ENCODE measurements at regions of chr3 and their contacts with region 1.

Region 1: GRCh38 chr3:50542177-50543034 is 25.1 kb downstream of the C3orf18 start:
- DNase-seq: peak; percentile 77
- H3K4me3 ChIP-seq: no peak overlapping the region
- H3K27ac ChIP-seq: no peak overlapping the region
- H3K4me1 ChIP-seq: no peaks in the 10 kb centered on the region
- H3K27me3 ChIP-seq: no peaks in the 10 kb centered on the region
- CTCF ChIP-seq: peak; percentile 85

Region 2: DNA sequence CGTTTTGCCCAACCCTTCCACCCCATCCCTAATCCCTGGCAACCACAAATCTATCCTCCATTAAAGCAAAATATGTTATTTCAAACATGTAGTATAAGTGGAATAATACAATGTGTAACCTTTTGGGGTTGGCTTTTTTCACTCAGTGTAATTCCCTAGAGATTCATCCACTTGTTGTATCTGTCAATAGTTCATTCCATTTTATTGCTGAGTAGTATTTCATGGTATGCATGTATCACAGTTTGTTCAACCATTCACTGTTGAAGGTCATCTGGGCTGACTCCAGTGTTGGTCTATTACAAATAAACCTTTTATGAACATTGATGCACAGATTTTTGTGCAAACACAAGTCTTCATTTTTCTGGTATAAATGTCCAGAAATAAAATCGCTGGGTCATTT is 949.4 kb before region 1 on chr3:
- intact Hi-C with region 1: no loop called
- DNase-seq: no peak
- H3K4me3 ChIP-seq: no peak overlapping the region
- H3K27ac ChIP-seq: no peak overlapping the region
- H3K4me1 ChIP-seq: no peaks in the 10 kb centered on the region
- H3K27me3 ChIP-seq: no peaks in the 10 kb centered on the region
- CTCF ChIP-seq: no peak

Region 3: DNA sequence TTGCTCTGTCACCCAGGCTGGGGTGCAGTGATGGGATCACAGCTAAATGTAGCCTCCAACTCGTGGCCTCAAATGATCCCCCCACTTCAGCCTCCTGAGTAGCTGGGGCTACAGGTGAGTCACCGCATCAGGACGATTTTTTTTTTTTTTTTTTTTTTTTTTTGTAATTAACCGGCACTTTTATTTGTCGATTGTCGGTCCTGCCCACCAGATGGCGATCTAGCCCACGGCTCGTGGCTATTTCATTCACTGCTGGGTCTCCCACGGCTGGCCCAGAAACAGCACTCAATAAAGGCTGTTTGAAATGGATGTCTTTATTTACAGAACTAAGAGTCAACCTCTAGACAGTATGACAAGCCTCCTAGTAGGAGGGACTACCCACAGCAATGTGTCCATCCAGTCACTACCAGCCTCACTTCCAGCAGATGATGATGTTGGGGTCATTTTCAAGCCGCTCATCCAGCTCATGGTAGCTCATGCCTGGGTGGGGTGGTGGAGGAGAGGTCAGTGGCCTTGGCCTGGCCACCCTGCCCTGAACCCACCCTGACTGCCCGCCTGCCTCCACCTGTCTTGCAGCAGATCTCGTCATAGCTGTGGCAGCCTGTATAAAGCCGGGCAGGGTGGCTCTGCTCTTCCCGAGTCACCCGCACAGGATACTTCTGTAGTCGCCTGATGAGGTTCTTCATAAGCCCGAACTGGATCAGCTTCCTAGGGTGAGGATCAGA is 195.1 kb before region 1 on chr3:
- intact Hi-C with region 1: loop called (anchors 5 kb)
- DNase-seq: peak; percentile 73
- H3K4me3 ChIP-seq: no peak overlapping the region
- H3K27ac ChIP-seq: no peak overlapping the region
- H3K4me1 ChIP-seq: peaks cover 19% of the 10 kb centered on the region
- H3K27me3 ChIP-seq: no peaks in the 10 kb centered on the region
- CTCF ChIP-seq: peak; percentile 47

Region 4: DNA sequence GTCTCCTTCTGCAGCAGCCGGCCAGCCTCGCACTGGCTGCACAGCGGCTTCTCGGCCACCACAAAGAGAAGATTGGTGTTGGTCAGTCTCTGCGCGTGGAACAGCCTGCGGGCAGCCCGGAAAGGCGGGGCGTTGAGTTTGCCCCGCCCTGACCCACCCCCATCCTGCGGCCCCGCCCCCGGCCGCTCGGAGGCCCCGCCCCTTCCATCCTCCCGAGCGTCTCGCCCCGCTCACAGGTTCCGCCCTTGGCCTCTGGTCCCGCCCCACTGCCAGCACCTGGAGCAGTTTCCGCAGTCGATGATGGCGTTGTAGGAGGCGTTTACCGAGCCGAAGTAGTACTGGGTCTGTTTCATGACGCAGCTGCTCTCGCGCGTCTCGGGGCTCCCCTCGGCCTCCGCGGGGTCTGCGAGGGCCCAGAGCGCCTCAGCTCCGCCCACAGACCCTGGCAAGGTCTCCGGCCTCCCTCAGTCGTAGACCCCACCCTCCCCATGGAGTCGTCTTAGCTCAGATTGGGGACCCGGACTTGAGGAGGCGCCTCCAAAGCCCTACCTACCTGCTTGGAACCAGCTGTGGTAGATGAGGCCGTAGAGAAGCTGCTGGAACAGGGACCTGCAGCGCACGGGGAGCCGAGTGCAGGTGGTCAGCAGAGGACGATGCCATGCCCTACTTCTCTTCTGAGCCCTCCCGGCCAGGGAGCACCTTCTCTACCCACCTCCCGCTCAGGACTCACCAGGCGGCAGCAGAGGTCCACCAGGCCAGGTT is 177.1 kb before region 1 on chr3:
- intact Hi-C with region 1: loop called (anchors 5 kb)
- DNase-seq: peak; percentile 97
- H3K4me3 ChIP-seq: peak overlapping the region; percentile 66
- H3K27ac ChIP-seq: peak overlapping the region; percentile 70
- H3K4me1 ChIP-seq: no peaks in the 10 kb centered on the region
- H3K27me3 ChIP-seq: no peaks in the 10 kb centered on the region
- CTCF ChIP-seq: no peak

Region 5: DNA sequence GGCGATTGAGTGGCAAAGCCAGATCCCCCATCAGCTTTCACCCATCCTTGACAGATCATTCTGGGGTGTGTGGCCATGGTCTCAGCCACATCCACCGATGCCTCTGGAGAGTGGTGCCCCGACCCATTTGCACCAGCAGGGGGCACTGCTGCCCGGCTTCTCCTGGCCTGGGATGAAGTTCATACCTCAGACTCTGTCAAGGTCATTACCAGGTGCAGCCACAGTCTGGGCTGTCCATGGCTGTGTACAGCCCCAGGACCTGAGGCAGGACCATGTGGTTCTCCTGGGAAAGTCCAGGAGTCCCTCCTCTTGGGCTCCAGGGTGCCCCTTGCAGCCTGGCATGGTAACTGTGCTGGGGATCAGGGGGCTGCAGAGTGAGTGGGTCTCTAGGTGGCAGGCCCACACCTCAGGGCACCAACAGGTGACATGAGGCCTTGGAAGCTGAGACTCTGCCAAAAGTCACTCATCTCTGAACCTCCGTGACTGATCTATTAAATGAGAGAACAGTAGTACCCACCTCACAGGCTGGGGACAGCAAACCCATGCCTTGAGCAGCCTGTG is 106.2 kb before region 1 on chr3:
- intact Hi-C with region 1: loop called (anchors 2 kb)
- DNase-seq: peak; percentile 81
- H3K4me3 ChIP-seq: no peak overlapping the region
- H3K27ac ChIP-seq: no peak overlapping the region
- H3K4me1 ChIP-seq: no peaks in the 10 kb centered on the region
- H3K27me3 ChIP-seq: no peaks in the 10 kb centered on the region
- CTCF ChIP-seq: peak; percentile 85

Region 6: GRCh38 chr3:50737908-50738598 is 195.6 kb after region 1 on chr3:
- intact Hi-C with region 1: no loop called
- DNase-seq: no peak
- H3K4me3 ChIP-seq: no peak overlapping the region
- H3K27ac ChIP-seq: no peak overlapping the region
- H3K4me1 ChIP-seq: no peaks in the 10 kb centered on the region
- H3K27me3 ChIP-seq: no peaks in the 10 kb centered on the region
- CTCF ChIP-seq: no peak

Measured in colonic mucosa (tissue), 4 donors.